ENCODE measurements at regions of chr10 and their contacts with region 1.

Region 1: GRCh38 chr10:14954001-14954770 is at the start of gene DCLRE1C:
- DNase-seq: peak; percentile 92
- H3K4me3 ChIP-seq: peak within 1 kb of the TSS; percentile 73
- H3K27ac ChIP-seq: peak within 1 kb of the TSS; percentile 51
- H3K4me1 ChIP-seq: peaks cover 17% of the 10 kb centered on the region
- H3K27me3 ChIP-seq: no peaks in the 10 kb centered on the region
- CTCF ChIP-seq: no peak
- total RNA-seq, gene DCLRE1C: 13.1 and 14.6 TPM in 2 replicates

Region 2: GRCh38 chr10:14507176-14507575 is 447.0 kb before region 1 on chr10:
- CTCF ChIA-PET with region 1: interaction called, 10 read pairs
- POLR2A ChIA-PET with region 1: no interaction called
- intact Hi-C with region 1: no loop called
- DNase-seq: no peak
- H3K4me3 ChIP-seq: no peak overlapping the region
- H3K27ac ChIP-seq: no peak overlapping the region
- H3K4me1 ChIP-seq: no peaks in the 10 kb centered on the region
- H3K27me3 ChIP-seq: no peaks in the 10 kb centered on the region
- CTCF ChIP-seq: no peak

Region 3: DNA sequence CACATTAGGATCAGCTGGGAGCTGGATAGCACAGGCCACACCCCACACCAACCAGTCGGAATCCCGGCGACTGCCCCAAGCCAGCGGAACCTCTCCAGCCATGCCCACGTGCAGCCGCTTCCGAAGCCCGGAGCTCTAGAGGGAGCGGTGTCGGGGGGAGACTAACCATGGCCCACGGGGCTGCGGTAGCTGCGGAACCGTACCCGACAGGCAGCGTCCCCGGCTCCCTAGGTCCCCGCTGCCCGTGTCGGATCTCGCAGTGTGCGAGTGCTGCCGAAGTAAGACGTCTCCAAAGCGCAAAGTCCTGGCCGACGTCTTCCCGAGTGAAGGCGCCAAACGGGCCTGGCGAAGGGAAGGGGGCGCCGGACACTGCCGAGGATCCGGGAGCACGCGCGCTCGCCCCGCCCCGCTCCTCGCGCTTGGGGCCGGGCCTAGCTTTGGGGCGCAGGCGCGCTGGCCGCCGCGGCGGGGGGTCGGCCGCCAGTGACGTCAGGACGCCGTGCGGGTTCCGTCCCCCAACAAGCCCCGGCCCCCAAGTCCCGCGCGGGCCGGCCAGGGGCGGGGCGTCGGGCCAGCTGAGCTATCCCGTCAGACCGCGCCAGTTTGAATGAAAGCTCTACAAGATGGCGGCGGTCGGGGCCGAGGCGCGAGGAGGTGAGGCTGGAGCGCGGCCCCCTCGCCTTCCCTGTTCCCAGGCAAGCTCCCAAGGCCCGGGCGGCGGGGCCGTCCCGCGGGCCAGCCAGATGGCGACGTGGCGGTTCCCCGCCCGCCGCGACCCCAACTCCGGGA is 75.7 kb before region 1 on chr10 and contains the start of gene SUV39H2:
- CTCF ChIA-PET with region 1: no interaction called
- POLR2A ChIA-PET with region 1: no interaction called
- intact Hi-C with region 1: loop called (anchors 5 kb)
- DNase-seq: peak; percentile 97
- H3K4me3 ChIP-seq: peak within 1 kb of the TSS; percentile 88
- H3K27ac ChIP-seq: peak within 1 kb of the TSS; percentile 94
- H3K4me1 ChIP-seq: peaks cover 8% of the 10 kb centered on the region
- H3K27me3 ChIP-seq: no peaks in the 10 kb centered on the region
- CTCF ChIP-seq: no peak
- total RNA-seq, gene SUV39H2: 78.8 and 83.2 TPM in 2 replicates